PC-3 (cell line): ENCODE measurements at regions of chr11 and their contacts with region 1.

Region 1: DNA sequence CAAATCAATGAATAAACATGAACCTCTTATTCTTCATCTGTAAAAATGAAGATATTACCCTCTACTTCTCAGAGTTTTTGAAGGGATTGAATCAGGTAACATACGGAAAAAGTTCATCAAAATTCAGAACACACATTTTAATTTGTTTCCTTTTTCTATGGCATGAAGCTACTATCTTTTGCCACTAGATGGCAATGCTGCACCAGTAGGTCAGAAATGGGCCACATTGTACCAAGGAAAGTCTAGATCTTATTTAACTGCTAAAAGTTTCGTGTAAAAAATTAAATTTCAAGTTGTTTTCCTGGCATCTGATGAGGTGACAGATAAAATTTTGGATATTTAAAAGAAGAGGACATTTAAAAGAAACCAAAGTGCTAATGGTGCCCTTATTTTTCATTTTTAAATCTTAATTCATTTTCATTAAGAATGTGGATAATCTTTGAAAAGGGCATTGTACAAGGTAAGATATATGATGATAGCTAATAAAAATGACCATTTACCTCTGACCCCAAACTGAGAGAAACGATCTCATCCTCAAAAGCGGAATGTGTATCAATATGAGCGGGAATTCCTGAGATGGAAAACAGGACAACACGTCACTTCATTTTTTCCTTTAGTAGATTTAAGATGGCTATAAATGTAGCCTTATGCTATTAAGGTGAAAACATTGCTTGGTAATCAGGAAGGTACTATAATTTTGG is 16.1 kb downstream of the ALKBH8 start:
- DNase-seq: peak; percentile 85
- ATAC-seq: no peak
- H3K4me3 ChIP-seq: no peak overlapping the region
- H3K27ac ChIP-seq: no peak overlapping the region
- H3K4me1 ChIP-seq: peaks cover 20% of the 10 kb centered on the region
- H3K27me3 ChIP-seq: no peaks in the 10 kb centered on the region
- CTCF ChIP-seq: peak; percentile 99

Region 2: DNA sequence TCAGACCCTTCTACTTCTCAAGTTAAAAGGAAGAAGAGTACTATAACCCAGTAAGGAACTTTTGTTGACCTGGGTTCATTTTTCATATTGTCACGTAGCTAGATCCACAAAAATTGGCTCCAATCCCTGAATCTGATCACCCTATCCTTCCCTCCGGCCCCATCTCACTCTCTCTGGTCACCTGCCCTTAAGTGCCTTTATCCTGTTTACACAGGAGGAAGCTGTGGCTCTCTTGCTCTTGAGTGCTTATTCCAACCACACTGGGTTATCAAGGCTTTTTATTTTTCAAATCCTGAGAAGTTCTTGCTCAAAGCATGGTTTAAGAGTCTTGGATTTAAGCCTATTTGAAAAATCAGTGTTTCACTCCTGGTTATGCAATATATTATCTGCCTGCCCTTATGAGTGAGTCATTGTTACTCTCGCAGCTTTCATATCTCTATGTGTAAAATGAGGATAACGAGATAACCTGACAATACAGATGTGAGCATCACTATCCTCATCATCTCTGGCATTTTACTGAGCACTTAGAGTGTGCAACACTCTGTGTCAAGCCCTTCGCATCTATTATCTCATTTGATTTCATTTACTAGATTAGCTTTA is 825.0 kb before region 1 on chr11:
- CTCF ChIA-PET with region 1: no interaction called
- POLR2A ChIA-PET with region 1: no interaction called
- intact Hi-C with region 1: loop called (anchors 5 kb)
- DNase-seq: no peak
- ATAC-seq: no peak
- H3K4me3 ChIP-seq: no peak overlapping the region
- H3K27ac ChIP-seq: no peak overlapping the region
- H3K4me1 ChIP-seq: no peaks in the 10 kb centered on the region
- H3K27me3 ChIP-seq: no peaks in the 10 kb centered on the region
- CTCF ChIP-seq: no peak

Region 3: GRCh38 chr11:107565219-107565937 is 16.0 kb after region 1 on chr11 and contains the start of gene ALKBH8:
- CTCF ChIA-PET with region 1: interaction called, 11 read pairs
- POLR2A ChIA-PET with region 1: interaction called, 6 read pairs
- intact Hi-C with region 1: loop called (anchors 2 kb)
- DNase-seq: peak; percentile 84
- ATAC-seq: peak; percentile 71
- H3K4me3 ChIP-seq: peak within 1 kb of the TSS; percentile 73
- H3K27ac ChIP-seq: peak within 1 kb of the TSS; percentile 64
- H3K4me1 ChIP-seq: peaks cover 48% of the 10 kb centered on the region
- H3K27me3 ChIP-seq: no peaks in the 10 kb centered on the region
- CTCF ChIP-seq: no peak
- total RNA-seq, gene ALKBH8: 7.0 and 14.3 TPM in 2 replicates

Region 4: DNA sequence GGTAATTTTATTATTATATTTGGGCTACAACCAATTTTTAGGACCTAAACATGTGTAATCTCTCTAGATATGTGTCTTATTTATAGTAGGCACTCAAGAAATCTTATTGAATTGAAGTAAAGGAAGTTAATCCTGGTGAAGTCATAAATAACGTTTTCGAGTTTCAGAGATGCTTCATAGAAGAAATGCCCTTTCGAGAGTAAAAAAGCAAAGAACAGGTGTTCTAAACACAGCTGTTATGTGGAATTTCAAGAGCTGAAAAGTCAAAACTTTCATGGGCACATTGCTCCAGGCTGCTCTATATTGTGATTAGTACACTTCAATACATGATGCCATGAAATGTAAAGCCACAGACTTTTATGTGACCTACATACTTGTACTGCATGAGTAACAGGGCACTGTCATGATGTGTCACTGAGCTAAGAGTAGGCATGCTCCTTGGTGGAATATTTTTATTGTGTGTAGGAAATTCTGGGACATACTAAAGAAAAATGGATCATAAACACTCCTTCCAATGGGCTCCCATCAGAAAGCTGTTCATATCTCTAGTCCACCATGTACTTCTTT is 34.3 kb after region 1 on chr11:
- CTCF ChIA-PET with region 1: no interaction called
- POLR2A ChIA-PET with region 1: interaction called, 10 read pairs
- intact Hi-C with region 1: no loop called
- DNase-seq: peak; percentile 98
- ATAC-seq: peak; percentile 100
- H3K4me3 ChIP-seq: no peak overlapping the region
- H3K27ac ChIP-seq: no peak overlapping the region
- H3K4me1 ChIP-seq: peaks cover 22% of the 10 kb centered on the region
- H3K27me3 ChIP-seq: peaks cover 8% of the 10 kb centered on the region; the same call in 1 of the 2 replicates
- CTCF ChIP-seq: no peak

Region 5: DNA sequence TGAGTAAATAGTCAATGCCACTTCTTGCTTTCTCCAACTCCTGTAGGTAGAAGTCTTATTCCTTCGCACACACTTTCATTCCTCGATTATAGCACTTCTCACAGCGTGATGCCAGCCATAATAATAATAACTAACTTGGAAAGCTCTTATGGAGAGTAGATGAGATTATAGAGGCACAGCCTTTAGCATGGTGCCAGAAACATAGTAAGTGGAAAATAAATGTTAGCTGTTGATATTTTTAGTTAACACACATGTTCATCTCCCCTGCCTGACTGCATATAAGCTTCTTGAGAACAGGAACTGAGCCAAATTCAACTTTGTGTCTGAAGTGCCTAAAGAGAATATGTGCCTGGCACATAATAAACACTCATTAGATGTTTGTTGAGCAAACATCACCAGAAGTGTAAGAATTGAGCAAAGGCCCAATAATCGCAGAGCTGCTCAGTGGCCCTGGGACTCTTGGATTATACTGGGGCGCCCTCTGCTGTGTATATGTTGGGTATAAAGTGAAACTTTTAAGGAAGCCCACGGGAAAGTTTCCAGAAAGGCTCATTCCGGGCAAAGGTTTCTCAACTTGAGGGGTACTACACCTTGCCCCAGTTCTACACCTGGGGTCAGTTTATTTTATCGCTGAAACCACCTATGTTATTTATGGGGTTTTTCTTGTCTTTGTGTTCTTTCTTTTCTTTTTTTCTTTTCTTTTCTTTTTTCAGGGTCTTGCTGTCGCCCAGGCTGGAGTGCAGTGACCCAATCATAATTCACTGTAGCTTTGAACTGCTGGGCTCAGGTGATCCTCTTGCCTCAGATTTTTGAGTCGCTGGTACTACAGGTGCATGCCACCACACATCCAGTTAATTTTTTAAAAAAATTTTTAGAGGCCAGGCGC is 140.2 kb after region 1 on chr11:
- CTCF ChIA-PET with region 1: interaction called, 14 read pairs
- POLR2A ChIA-PET with region 1: interaction called, 4 read pairs
- intact Hi-C with region 1: loop called (anchors 1 kb)
- DNase-seq: peak; percentile 94
- ATAC-seq: peak; percentile 86
- H3K4me3 ChIP-seq: peak overlapping the region; percentile 45; the same call in 1 of the 2 replicates
- H3K27ac ChIP-seq: no peak overlapping the region
- H3K4me1 ChIP-seq: peaks cover 19% of the 10 kb centered on the region
- H3K27me3 ChIP-seq: 0 out of 2 replicates have a peak, but pooled peaks cover 6% of the 10 kb centered on the region
- CTCF ChIP-seq: peak; percentile 98

Region 6: DNA sequence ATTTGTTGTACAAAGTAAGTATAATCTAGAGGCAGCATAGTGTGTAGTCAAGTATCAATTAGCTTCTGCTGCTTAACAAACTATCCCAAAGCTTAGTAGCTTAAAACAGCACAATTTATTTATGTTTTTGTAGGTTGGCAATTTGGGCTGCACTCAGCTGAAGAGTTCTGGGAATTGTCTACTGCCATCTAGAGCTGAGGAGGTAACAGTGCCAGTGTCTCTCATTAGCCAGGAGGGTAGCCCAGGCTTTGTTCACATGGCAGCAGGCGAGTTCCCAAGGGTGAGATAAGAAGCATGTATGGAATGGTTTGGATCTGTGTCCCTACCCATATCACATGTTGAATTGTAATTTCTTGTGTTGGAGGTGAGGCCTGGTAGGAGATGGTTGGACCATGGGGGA is 208.3 kb after region 1 on chr11:
- CTCF ChIA-PET with region 1: no interaction called
- POLR2A ChIA-PET with region 1: no interaction called
- intact Hi-C with region 1: no loop called
- DNase-seq: peak; percentile 22
- ATAC-seq: peak; percentile 56; the same call in 1 of the 2 replicates
- H3K4me3 ChIP-seq: no peak overlapping the region
- H3K27ac ChIP-seq: no peak overlapping the region
- H3K4me1 ChIP-seq: no peaks in the 10 kb centered on the region
- H3K27me3 ChIP-seq: peaks cover 36% of the 10 kb centered on the region
- CTCF ChIP-seq: peak; percentile 72